ENCODE measurements at regions of chr1 and their contacts with region 1.

Region 1: DNA sequence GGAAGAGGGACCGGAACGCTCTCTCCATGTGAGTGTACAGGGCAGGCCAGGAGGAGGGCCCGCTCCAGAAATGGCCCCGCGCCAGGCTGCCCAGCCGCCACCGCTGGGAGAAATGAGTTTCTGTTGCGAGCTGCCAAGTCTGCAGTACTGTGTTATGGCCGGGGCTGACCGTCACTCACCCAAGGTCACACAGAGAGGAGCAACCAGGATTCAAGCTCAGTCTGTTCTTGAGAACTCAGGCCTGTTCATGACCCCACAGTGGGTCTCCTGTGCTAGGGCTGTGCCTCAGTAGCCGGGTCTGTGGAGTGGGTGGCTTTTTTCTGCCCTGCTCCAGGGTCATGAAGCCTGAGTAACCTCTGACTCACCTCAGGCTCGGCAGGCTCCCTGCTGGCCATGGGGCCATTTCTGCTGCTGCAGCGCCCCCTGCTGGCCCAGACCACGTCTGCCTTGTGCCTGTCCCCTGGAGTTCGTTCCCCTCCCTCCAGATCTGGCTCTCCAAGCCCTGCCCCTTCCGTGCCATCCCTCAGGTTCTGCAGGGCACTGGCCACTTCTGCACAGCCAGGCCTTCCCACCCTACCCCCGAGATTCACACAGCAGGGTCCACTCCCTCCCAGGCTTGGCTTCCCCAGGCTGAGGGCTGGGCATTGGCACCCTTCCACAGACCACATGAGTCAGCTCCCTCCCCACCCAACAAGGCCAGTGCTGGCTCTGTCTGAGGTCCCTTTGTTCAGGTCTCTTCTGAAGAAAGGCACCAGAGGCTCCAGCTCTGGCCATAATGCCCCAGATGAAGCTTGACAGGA is 51.8 kb downstream of the EDN2 start:
- DNase-seq: peak; percentile 62
- ATAC-seq: peak; percentile 71
- H3K4me3 Mint-ChIP-seq: no peak overlapping the region
- H3K27ac Mint-ChIP-seq: no peak overlapping the region
- H3K4me1 Mint-ChIP-seq: no peaks in the 10 kb centered on the region
- H3K27me3 Mint-ChIP-seq: peaks cover 33% of the 10 kb centered on the region
- CTCF ChIP-seq: no peak

Region 2: GRCh38 chr1:41268154-41268770 is 164.4 kb before region 1 on chr1:
- CTCF ChIA-PET with region 1: no interaction called
- POLR2A ChIA-PET with region 1: no interaction called
- intact Hi-C with region 1: loop called (anchors 1 kb)
- DNase-seq: peak; percentile 55
- ATAC-seq: peak; percentile 72
- H3K4me3 Mint-ChIP-seq: no peak overlapping the region
- H3K27ac Mint-ChIP-seq: no peak overlapping the region
- H3K4me1 Mint-ChIP-seq: peaks cover 4% of the 10 kb centered on the region
- H3K27me3 Mint-ChIP-seq: peaks cover 2% of the 10 kb centered on the region
- CTCF ChIP-seq: peak; percentile 97

Region 3: DNA sequence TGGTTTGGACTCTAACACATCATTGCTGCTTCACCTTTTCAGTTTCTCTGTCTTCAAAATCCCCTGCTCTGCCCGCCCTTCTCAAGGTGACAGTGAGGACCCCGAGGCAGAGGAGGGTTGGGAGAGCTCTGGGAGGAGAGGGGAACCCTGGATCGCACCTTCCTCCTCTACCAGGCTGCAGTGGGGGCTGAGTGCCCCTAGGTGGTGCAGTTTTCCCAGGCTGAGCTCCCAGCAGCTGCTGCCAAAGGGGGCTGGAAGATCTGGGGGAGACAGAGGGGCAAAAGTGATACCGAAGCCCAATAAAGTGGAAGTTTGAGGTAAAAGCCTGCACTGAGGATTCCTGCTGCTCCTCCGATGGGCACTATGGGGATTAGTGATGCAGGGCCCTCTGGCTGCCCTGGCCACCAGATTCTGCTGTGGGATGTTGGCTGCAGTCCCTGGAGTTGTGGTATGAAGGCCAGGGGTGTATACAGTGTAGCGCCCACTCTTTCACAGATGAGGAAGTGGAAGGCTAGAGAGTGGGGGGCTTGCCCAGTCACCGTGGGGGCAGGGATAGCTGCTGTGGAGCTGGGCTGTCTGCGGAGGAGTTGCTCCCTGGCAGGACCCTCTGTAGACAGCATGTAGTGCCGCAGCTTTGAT is 149.9 kb before region 1 on chr1:
- CTCF ChIA-PET with region 1: interaction called, 3 read pairs
- POLR2A ChIA-PET with region 1: no interaction called
- intact Hi-C with region 1: loop called (anchors 5 kb)
- DNase-seq: peak; percentile 22
- ATAC-seq: peak; percentile 54
- H3K4me3 Mint-ChIP-seq: no peak overlapping the region
- H3K27ac Mint-ChIP-seq: no peak overlapping the region
- H3K4me1 Mint-ChIP-seq: no peaks in the 10 kb centered on the region
- H3K27me3 Mint-ChIP-seq: peaks cover 22% of the 10 kb centered on the region
- CTCF ChIP-seq: no peak

Region 4: GRCh38 chr1:41545986-41546832 is 113.5 kb after region 1 on chr1:
- CTCF ChIA-PET with region 1: no interaction called
- POLR2A ChIA-PET with region 1: no interaction called
- intact Hi-C with region 1: no loop called
- DNase-seq: no peak
- ATAC-seq: no peak
- H3K4me3 Mint-ChIP-seq: no peak overlapping the region
- H3K27ac Mint-ChIP-seq: no peak overlapping the region
- H3K4me1 Mint-ChIP-seq: peaks cover 40% of the 10 kb centered on the region
- H3K27me3 Mint-ChIP-seq: no peaks in the 10 kb centered on the region
- CTCF ChIP-seq: no peak